Ovary (tissue), 10 donors: ENCODE measurements at regions of chr16 and their contacts with region 1.

Region 1: GRCh38 chr16:30649725-30650368 is 913 bp upstream of the PRR14 start:
- DNase-seq: no peak
- H3K4me3 ChIP-seq: peak overlapping the region; percentile 49
- H3K27ac ChIP-seq: peak overlapping the region; percentile 60 to 83
- H3K4me1 ChIP-seq: peaks cover 6% of the 10 kb centered on the region
- H3K27me3 ChIP-seq: no peaks in the 10 kb centered on the region
- CTCF ChIP-seq: no peak
- EP300 ChIP-seq: no peak
- POLR2A ChIP-seq: peak; percentile 33

Region 2: GRCh38 chr16:30585400-30586189 is 64.3 kb before region 1 on chr16 and contains the start of gene ZNF785:
- intact Hi-C with region 1: loop called in 2 of 4 experiments (anchors 10 kb)
- DNase-seq: peak; percentile 94 to 98 (median 96)
- H3K4me3 ChIP-seq: peak within 1 kb of the TSS; percentile 70
- H3K27ac ChIP-seq: peak within 1 kb of the TSS; percentile 84 to 91
- H3K4me1 ChIP-seq: peaks cover 5% of the 10 kb centered on the region
- H3K27me3 ChIP-seq: no peaks in the 10 kb centered on the region
- CTCF ChIP-seq: peak in 2 of 3 donors; percentile 20 to 53
- EP300 ChIP-seq: no peak
- POLR2A ChIP-seq: peak; percentile 23
- total RNA-seq, gene ZNF785: 7.0 to 29.4 (median 22.2) TPM